ENCODE measurements at regions of chr1 and their contacts with region 1.

Region 1: DNA sequence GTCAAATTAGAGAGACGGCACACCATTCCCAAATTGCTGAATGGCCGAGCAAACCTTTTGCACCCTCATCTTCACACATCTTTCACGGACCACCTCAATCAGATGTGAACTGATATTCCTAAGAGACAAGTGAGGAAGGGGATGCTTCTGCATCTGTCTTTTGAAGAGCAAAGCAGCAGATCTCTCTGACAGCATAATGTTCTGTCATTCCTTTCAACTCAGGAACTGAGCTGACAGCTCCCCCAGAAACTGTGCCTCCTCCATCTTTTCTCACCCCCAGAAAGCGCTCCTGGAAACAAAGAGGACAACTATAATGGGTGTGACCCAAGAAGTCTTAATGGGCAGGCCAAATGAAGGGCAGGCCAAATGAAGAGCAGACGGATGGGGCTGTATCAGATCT is 256.4 kb downstream of the C1orf94 start:
- DNase-seq: no peak

Region 2: DNA sequence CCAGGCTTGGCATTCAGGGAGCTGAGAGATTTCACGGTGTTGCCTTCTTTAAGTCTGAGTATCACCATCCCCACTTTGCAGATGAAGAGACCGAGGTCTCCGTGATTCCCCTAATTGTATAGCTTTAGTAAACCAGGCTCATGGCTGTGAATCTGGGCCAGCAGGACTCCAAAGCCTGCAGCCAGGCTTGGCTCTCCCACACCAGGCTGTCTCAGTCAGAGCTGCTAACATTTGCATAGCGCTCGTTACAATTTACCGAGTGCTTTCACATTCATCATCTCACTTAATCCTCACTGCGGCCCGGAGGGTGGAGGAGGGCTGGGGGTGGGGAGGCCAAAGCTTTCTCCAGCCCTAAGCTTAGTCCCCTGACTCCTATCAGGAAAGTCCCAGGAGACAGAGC is 244.7 kb before region 1 on chr1:
- intact Hi-C with region 1: loop called in 1 of 2 experiments (anchors 5 kb)
- DNase-seq: no peak

Region 3: GRCh38 chr1:34378968-34379856 is 53.9 kb before region 1 on chr1:
- intact Hi-C with region 1: no loop called
- DNase-seq: no peak

Region 4: GRCh38 chr1:34452451-34452850 is 19.4 kb after region 1 on chr1:
- intact Hi-C with region 1: loop called in 1 of 2 experiments (anchors 1 kb)
- DNase-seq: no peak

Measured in posterior vena cava (tissue), 2 donors.